A673 (cell line): ENCODE measurements at regions of chr3 and their contacts with region 1.

Region 1: GRCh38 chr3:173351886-173352285 is 45.7 kb upstream of the NLGN1 start:
- DNase-seq: no peak
- H3K4me3 ChIP-seq: no peak overlapping the region
- H3K27ac ChIP-seq: no peak overlapping the region
- H3K4me1 ChIP-seq: no peaks in the 10 kb centered on the region
- H3K27me3 ChIP-seq: no peaks in the 10 kb centered on the region
- CTCF ChIP-seq: no peak

Region 2: DNA sequence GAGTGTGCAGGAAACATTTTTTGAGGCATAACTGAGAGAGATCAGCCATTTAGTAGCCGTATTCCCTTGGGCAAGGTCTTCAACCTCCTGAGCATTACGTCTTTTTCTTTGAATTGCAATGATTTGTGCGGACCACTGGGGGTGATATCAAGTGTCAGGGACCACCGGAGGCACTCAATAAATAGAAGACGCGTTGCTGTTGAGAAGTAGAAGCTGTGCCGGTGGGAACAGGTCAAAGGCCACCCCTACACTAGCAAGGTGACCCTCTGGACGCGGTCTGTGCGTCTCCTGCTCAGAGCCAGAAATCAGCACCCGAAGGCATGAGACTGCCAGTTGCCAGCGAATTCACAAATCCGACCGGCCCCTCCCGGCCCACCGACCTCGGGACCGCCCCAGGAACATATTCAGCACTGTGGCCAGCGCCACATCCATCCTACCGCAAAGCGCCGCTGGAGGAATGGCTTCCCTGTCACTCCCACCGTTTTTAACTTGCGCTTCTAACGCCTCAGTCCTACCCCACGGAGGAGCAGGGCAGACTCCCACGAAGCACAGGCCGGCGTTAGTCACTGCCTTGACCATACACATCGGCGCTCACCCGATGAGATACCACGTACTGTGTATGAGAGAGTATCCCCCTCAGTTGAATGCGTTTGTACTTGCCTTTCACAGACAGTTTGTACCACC is 902.3 kb before region 1 on chr3:
- CTCF ChIA-PET with region 1: no interaction called
- POLR2A ChIA-PET with region 1: no interaction called
- intact Hi-C with region 1: no loop called
- DNase-seq: peak; percentile 51
- H3K4me3 ChIP-seq: no peak overlapping the region
- H3K27ac ChIP-seq: no peak overlapping the region
- H3K4me1 ChIP-seq: no peaks in the 10 kb centered on the region
- H3K27me3 ChIP-seq: peaks cover 100% of the 10 kb centered on the region
- CTCF ChIP-seq: no peak

Region 3: DNA sequence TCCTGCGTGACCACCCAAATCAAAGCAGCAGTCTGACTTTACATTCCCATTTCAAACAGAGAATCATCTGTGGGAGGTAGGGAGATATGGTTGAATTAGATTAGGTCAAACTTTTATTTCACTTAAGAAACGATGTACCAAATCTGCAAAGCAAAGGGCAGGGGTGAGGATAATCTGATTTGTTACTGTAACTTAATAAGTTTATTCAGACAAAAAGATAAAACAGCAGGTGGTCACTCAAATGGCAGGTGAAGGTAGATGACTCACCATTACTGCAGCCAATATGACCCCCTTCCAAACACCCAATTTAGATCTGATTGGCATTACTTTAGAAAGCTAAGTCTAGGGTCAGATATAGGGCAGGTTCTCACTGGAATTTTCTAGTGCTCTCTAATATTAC is 856.3 kb after region 1 on chr3:
- CTCF ChIA-PET with region 1: no interaction called
- POLR2A ChIA-PET with region 1: interaction called, 13 read pairs
- intact Hi-C with region 1: no loop called
- DNase-seq: no peak
- H3K4me3 ChIP-seq: no peak overlapping the region
- H3K27ac ChIP-seq: no peak overlapping the region
- H3K4me1 ChIP-seq: peaks cover 6% of the 10 kb centered on the region
- H3K27me3 ChIP-seq: no peaks in the 10 kb centered on the region
- CTCF ChIP-seq: no peak